ENCODE measurements at regions of chr10 and their contacts with region 1.

Region 1: DNA sequence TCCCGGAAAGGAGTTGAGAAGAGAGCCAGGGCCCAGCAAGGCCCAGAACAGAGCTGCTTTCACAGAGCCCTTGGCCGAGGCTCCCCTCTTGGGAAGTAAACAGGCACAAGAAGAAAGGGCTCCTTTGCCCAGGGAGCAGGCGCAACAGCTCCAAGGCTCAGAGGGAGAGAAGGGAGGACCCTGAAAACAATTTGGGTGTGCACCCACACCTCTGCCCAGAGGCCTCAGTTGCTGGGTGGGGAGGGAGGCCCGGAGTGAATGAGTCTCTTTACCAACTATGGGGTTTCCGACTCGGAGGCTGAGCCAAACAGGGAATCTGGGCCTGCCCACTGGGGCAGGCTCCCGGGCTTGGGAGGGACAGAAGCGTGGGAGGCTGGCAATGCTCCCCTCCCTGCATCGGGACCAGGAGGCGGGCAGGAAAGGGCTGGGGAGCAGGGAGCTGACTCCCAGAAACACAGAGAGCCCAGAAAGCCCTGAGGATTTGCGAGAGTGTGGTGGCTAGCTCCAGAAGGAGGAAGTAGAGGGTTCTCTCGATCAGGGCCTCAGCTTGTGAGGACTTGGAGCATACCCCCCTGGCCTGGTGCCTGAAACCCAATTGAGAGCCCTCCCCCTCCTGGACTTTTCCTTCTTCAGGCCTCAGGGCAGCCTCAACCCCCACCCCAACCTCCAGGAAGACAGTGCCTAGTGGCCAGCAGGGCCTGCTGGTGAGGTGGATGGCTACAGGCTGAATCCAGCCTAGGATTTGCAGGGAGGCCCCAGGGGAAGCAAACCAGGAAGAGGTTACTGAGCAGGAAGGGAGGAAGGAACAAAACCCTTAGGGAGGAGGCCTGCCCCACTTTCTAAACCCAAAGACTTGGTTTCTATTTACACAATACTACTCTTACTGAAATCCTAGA is 6.2 kb downstream of the C10orf105 start:
- DNase-seq: peak; percentile 52
- H3K4me3 Mint-ChIP-seq: peak overlapping the region; percentile 66
- H3K27ac Mint-ChIP-seq: peak overlapping the region; percentile 92
- H3K4me1 Mint-ChIP-seq: peaks cover 54% of the 10 kb centered on the region
- H3K27me3 Mint-ChIP-seq: no peaks in the 10 kb centered on the region

Region 2: DNA sequence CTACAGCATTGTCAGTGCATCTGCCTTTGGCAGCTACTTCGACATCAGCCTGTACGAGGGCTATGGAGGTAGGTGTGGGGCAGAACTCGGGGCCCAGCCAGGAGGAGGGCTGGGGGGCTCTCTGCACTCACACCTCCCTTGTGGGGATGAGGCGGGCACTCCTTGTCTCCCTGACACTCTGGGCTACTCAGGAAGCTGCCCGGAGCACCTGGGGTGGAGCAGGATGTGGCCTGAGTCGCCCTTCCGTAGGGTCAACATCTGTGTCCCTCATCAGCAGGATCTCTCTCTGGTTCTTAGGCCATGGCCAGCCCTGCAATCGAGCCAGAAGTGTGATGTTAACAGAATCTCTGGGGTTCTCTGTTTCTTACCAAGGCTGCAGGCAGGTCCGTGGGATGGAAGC is 34.0 kb before region 1 on chr10:
- CTCF ChIA-PET with region 1: no interaction called
- POLR2A ChIA-PET with region 1: no interaction called
- DNase-seq: no peak
- H3K4me3 Mint-ChIP-seq: no peak overlapping the region
- H3K27ac Mint-ChIP-seq: no peak overlapping the region
- H3K4me1 Mint-ChIP-seq: peaks cover under 1% of the 10 kb centered on the region
- H3K27me3 Mint-ChIP-seq: no peaks in the 10 kb centered on the region

Region 3: DNA sequence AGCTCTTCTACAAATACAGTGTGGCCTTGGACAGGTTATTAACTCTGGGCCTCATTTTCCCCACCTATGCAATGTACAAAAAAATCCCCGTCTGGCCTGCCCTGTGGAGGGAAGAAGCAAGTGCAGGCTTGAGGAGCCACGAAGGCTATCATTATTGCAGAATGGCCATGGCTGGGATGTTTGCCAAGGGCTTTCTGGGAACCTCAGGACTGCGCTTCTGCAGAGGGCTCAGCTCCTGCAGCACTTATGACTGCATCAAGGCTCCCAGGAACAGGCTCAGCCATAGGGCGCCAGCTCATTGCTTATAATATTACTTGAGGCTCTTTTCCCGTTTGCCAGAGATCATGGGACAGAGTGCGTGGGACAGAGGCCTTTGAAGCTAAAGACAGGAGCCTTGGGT is 26.7 kb after region 1 on chr10:
- CTCF ChIA-PET with region 1: interaction called, 5 read pairs
- POLR2A ChIA-PET with region 1: interaction called, 13 read pairs
- DNase-seq: no peak
- H3K4me3 Mint-ChIP-seq: no peak overlapping the region
- H3K27ac Mint-ChIP-seq: no peak overlapping the region
- H3K4me1 Mint-ChIP-seq: peaks cover 90% of the 10 kb centered on the region
- H3K27me3 Mint-ChIP-seq: no peaks in the 10 kb centered on the region

Region 4: DNA sequence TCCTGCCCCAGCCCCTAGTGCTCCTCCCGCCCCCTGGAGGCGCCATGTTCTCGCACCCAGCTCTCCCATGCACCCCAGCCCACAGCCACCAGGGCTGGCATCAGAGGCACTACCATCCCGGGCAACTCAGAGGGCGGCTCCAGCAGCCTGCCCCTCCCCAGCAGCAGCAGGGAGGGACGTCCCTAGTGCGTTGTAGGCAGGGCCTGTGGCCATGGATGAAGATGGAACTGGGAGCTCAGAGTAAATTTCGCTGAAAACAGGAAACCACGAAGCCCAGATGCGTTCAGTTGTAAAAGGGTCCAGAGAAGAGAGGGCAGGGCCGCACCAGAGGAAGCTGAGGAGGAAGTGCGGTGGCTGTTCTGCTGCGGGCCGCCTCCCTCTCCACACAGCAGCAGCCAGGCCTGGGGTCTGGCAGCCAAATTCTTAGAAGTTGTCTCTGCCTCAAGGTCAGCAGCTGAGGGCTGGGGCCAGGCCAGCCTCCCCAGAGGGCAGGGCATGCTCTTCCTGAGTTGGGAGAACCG is 35.3 kb after region 1 on chr10:
- CTCF ChIA-PET with region 1: interaction called, 10 read pairs
- POLR2A ChIA-PET with region 1: interaction called, 30 read pairs
- DNase-seq: peak; percentile 93
- H3K4me3 Mint-ChIP-seq: peak overlapping the region; percentile 43
- H3K27ac Mint-ChIP-seq: peak overlapping the region; percentile 95
- H3K4me1 Mint-ChIP-seq: peaks cover 97% of the 10 kb centered on the region
- H3K27me3 Mint-ChIP-seq: no peaks in the 10 kb centered on the region

Region 5: DNA sequence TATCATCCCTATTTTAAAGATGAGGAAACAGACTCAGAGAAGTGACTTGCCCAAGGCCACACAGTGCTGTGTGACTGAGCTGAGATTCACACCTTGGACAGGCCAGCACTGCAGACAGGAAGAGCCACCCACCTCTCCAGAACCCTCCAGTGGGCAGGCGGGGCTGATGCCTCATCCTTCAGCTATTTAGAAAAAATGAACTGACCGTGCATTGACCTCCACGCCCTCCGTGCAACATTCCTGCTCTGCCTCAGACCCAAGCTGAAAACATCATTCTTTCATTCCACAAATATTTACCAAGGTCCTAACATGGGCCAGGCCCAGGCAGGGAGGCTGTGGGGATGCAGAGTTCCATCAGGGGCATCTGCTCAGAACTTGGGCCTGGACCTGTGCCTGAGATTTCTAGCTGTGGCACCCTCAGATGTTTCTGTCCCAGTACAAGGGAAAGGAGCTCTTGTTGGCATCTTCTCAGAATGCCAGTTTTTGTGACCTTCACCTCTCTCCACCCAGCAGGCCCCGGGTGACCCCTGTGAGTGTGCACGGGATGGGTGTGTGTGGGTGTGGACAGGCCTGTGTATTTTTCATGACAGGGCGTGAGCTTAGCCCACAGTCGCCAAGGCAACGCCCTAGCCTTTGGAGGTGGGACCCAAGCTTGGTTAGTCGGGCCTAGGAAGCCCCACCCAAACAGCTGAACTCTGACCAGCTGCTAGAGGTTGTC is 53.5 kb after region 1 on chr10:
- CTCF ChIA-PET with region 1: interaction called, 28 read pairs
- POLR2A ChIA-PET with region 1: interaction called, 10 read pairs
- DNase-seq: peak; percentile 67
- H3K4me3 Mint-ChIP-seq: peak overlapping the region; percentile 57
- H3K27ac Mint-ChIP-seq: peak overlapping the region; percentile 91
- H3K4me1 Mint-ChIP-seq: peaks cover 85% of the 10 kb centered on the region
- H3K27me3 Mint-ChIP-seq: no peaks in the 10 kb centered on the region

Measured in activated CD4-positive, alpha-beta memory T cell treated with anti-CD3 and anti-CD28 coated beads, Interleukin-2, amount 10 ng/mL, durations not matched to agents 7 days and 5 days (primary cell).